ENCODE measurements at regions of chr4 and their contacts with region 1.

Region 1: DNA sequence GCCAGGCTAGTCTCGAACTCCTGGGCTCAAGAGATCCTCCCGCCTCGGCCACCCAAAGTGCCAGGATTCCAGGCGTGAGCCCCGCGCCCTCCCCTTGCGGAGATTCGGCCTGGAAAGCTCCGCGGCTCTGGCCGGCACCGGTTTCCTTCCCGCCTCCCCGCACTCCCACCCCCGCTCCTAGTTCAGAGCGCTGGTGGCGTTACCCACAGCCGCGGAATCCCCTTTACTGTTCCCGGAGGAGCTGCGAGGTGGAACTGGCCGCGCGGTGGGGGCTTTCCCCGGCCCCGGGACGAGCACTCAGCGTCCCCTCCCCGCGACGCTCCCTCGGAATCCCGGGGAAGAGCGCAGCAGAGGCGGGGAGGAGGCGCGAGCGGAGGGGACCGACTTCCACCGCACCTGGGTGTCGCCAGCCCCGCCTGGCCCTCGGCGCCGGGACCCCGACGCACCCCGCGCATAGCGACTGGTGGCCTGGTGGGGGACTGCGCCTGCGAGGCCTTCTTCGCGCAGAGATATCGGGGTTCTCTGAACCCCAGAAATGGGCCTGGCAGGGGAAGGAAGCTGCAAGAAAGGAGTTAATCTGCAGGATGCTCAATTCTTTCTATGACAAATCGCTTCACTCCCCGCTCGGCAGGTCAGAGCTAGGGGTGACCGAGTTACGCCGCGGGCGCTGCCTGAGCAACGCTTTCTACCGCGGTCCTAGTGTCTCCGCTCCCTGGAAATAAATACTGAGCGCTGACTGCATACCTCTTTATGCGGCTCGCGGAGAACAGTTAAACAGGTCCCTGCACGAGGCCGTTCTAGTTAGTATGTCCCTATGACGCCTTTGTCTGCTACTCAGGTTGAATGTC is 14.6 kb upstream of the SLC25A4 start:
- DNase-seq: peak in 1 of 2 experiments; percentile 73
- H3K4me3 ChIP-seq: peak overlapping the region; percentile 47 to 70 (median 60)
- H3K27ac ChIP-seq: no peak overlapping the region
- H3K4me1 ChIP-seq: peaks cover 4 to 8% (median 6%) of the 10 kb centered on the region in 4 experiments; a peak in 6 of 7 replicates
- H3K27me3 ChIP-seq: peaks cover 1 to 22% (median 17%) of the 10 kb centered on the region in 4 experiments
- CTCF ChIP-seq: peak in 1 of 3 experiments; percentile 26; a peak in 1 of 4 replicates
- EP300 ChIP-seq: no peak
- POLR2A ChIP-seq: no peak; a peak in 1 of 3 replicates
- RAD21 ChIP-seq: no peak

Region 2: DNA sequence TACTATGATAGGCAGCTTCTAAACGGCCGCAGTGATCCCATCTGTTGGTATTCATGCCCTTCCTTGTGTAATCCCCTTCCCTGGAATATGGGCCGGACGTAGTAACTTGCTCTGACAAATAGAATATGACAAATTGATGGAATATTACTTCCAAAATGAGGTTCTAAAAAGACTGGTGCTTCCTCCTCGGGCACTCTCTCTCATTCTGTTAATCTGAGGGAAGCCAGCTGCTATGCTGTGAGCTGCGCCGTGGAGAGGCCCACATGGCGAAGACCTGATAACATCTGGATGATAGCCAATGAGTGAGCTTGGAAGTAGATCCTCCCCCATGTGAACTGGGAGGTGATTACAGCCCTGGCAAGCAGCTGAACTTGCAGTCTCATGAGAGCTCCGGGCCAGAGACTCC is 12.7 kb before region 1 on chr4:
- CTCF ChIA-PET with region 1: interaction called, 11 read pairs
- POLR2A ChIA-PET with region 1: interaction called, 17 read pairs
- DNase-seq: peak in 1 of 2 experiments; percentile 52
- H3K4me3 ChIP-seq: no peak overlapping the region
- H3K27ac ChIP-seq: no peak overlapping the region
- H3K4me1 ChIP-seq: peaks cover 0 to 9% (median 7%) of the 10 kb centered on the region in 4 experiments; a peak in 5 of 7 replicates
- H3K27me3 ChIP-seq: no peaks in the 10 kb centered on the region
- CTCF ChIP-seq: no peak
- EP300 ChIP-seq: no peak
- POLR2A ChIP-seq: peak in 1 of 2 experiments; percentile 47; a peak in 2 of 3 replicates
- RAD21 ChIP-seq: 0 out of 4 replicates have a peak, but pooled peaks of 1 of the 2 experiments have one; percentile 1

Region 3: GRCh38 chr4:185142912-185143595 is 14.6 kb after region 1 on chr4 and contains the start of gene SLC25A4:
- CTCF ChIA-PET with region 1: interaction called, 7 read pairs
- POLR2A ChIA-PET with region 1: interaction called, 13 read pairs
- DNase-seq: peak in 1 of 2 experiments; percentile 92
- H3K4me3 ChIP-seq: peak within 1 kb of the TSS; percentile 75 to 99 (median 80)
- H3K27ac ChIP-seq: no peak within 1 kb of the TSS
- H3K4me1 ChIP-seq: peaks cover 0 to 9% (median 6%) of the 10 kb centered on the region in 4 experiments; a peak in 5 of 7 replicates
- H3K27me3 ChIP-seq: no peaks in the 10 kb centered on the region; a peak in 1 of 7 replicates
- CTCF ChIP-seq: peak; percentile 36 to 45 (median 41)
- EP300 ChIP-seq: no peak
- POLR2A ChIP-seq: peak; percentile 93 to 98
- RAD21 ChIP-seq: no peak; a peak in 1 of 4 replicates
- total RNA-seq, gene SLC25A4: 42.0 TPM in 2 replicates

Region 4: DNA sequence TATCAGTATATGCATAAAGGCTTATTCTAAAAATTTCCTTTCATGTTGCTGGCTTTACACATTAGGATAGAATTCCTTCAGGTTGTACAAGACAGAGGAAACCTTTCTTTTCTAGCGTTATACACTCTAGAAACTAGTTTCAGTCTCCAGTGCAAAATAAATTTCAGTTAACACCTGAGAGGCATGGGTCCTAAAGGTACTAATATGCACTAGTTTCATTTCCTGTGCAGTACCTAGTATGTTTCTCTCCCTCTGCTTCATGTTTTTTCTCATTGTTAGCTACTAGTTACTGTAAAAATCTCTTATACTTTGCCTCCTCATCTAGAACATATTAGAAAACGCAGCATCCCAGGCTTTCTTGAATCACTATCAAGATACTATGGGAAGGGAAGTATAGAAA is 134.9 kb after region 1 on chr4:
- CTCF ChIA-PET with region 1: no interaction called
- POLR2A ChIA-PET with region 1: no interaction called
- DNase-seq: no peak
- H3K4me3 ChIP-seq: no peak overlapping the region
- H3K27ac ChIP-seq: no peak overlapping the region
- H3K4me1 ChIP-seq: peaks cover 0 to 6% (median 2%) of the 10 kb centered on the region in 4 experiments; a peak in 3 of 7 replicates
- H3K27me3 ChIP-seq: no peaks in the 10 kb centered on the region
- CTCF ChIP-seq: no peak
- EP300 ChIP-seq: no peak
- POLR2A ChIP-seq: no peak
- RAD21 ChIP-seq: no peak

Measured in H1 (cell line).